Right lobe of liver (tissue), 6 donors: ENCODE measurements at regions of chr17 and their contacts with region 1.

Region 1: GRCh38 chr17:77083531-77083930 is 57.2 kb upstream of the SEC14L1 start:
- DNase-seq: no peak
- ATAC-seq: no peak
- H3K4me3 ChIP-seq: no peak overlapping the region
- H3K27ac ChIP-seq: no peak overlapping the region
- H3K4me1 ChIP-seq: peaks cover 0 to 5% (median 0%) of the 10 kb centered on the region in 4 donors
- H3K27me3 ChIP-seq: no peaks in the 10 kb centered on the region
- CTCF ChIP-seq: no peak
- POLR2A ChIP-seq: no peak

Region 2: DNA sequence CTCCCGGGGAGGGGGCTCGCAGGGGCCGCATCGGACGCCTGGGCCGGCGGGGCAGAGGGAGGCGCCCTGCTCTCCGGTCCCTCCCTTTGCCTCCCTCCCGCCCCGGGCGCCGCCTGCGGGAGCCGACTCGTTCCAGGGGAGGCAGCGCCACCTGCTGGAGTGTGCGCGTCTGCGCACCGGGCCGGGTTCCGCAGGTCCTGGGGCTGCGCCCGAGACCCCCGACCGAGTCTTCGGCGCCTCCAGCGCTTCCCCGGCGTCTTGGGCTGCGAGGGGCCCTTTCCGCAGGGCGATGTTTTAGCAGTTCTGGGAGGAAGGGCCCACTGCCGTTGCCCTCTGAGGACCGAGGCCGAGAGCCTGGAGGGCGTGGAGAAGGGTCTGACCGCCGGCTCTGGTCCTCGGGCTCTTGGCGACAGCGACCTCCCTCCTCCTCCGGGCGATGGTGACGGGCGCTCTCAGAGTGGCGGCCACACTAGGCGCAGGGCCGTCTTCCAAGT is 163.6 kb after region 1 on chr17:
- intact Hi-C with region 1: loop called (anchors 5 kb)
- DNase-seq: peak; percentile 84 to 88 (median 87)
- ATAC-seq: peak; percentile 96 to 99 (median 98)
- H3K4me3 ChIP-seq: peak overlapping the region; percentile 60 to 64 (median 63)
- H3K27ac ChIP-seq: peak overlapping the region in 2 of 3 donors; percentile 17 to 33
- H3K4me1 ChIP-seq: peaks cover 0 to 9% (median 2%) of the 10 kb centered on the region in 4 donors
- H3K27me3 ChIP-seq: no peaks in the 10 kb centered on the region
- CTCF ChIP-seq: peak; percentile 98 to 99 (median 99)
- POLR2A ChIP-seq: no peak